Psoas muscle (tissue), 8 donors: ENCODE measurements at regions of chr13 and their contacts with region 1.

Region 1: GRCh38 chr13:43044720-43045301 is 21.4 kb downstream of the DNAJC15 start:
- DNase-seq: no peak
- ATAC-seq: no peak
- H3K4me3 ChIP-seq: no peak overlapping the region
- H3K27ac ChIP-seq: no peak overlapping the region
- H3K4me1 ChIP-seq: no peaks in the 10 kb centered on the region
- H3K27me3 ChIP-seq: no peaks in the 10 kb centered on the region
- CTCF ChIP-seq: no peak

Region 2: GRCh38 chr13:42991892-42992763 is 52.7 kb before region 1 on chr13 and contains the start of gene EPSTI1:
- intact Hi-C with region 1: loop called in 1 of 2 experiments (anchors 5 kb)
- DNase-seq: peak; percentile 54 to 70
- ATAC-seq: peak; percentile 61 to 89 (median 70)
- H3K4me3 ChIP-seq: peak within 1 kb of the TSS; percentile 87
- H3K27ac ChIP-seq: peak within 1 kb of the TSS; percentile 60
- H3K4me1 ChIP-seq: peaks cover 12% of the 10 kb centered on the region
- H3K27me3 ChIP-seq: no peaks in the 10 kb centered on the region
- CTCF ChIP-seq: no peak
- total RNA-seq, gene EPSTI1: 1.4 to 2.6 (median 1.5) TPM

Region 3: DNA sequence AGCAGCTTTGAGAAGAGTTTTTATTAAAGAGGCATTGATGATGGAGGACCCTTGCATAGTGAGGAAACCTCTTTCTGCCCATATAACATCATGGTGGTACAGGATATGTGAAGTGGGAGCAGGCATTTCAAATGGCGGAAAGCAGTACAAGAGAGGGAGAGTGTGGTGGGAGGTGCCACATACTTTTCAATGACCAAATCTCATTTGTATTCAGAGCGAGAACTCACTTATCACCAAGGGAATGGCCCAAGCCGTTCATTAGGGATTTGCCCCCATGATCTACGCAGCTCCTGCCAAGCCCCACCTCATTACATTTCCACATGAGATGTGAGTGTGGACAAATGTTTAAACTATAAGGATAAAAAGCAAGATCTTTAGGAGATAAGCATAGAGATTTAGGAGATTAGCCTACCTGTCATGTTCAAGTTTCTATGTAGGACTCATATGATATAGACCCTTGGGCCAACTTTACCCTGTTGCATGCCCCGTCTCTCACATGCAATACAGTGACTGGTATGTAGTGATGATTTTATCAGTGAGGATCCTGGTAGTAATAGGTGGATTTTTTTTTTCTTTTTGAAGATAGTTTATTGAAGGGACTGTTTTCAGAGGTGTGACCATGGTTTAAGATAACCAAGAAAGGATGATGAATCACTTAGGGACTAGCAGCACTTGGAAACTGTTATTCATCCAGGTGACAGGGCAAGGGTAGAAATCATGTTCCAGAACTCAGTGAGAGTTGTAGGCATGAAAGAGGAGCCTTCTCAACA is 16.9 kb after region 1 on chr13:
- intact Hi-C with region 1: no loop called
- DNase-seq: no peak
- ATAC-seq: peak in 2 of 4 donors; percentile 50 to 69
- H3K4me3 ChIP-seq: no peak overlapping the region
- H3K27ac ChIP-seq: no peak overlapping the region
- H3K4me1 ChIP-seq: peaks cover 4% of the 10 kb centered on the region
- H3K27me3 ChIP-seq: no peaks in the 10 kb centered on the region
- CTCF ChIP-seq: no peak